Common myeloid progenitor, CD34-positive (primary cell): ENCODE measurements at regions of chr12 and their contacts with region 1.

Region 1: GRCh38 chr12:85920324-85920947 is 46.3 kb downstream of the NTS start:
- DNase-seq: peak; percentile 32 to 55 (median 43)
- H3K4me3 ChIP-seq: no peak overlapping the region
- H3K27ac ChIP-seq: no peak overlapping the region
- H3K4me1 ChIP-seq: no peaks in the 10 kb centered on the region
- H3K27me3 ChIP-seq: no peaks in the 10 kb centered on the region

Region 2: DNA sequence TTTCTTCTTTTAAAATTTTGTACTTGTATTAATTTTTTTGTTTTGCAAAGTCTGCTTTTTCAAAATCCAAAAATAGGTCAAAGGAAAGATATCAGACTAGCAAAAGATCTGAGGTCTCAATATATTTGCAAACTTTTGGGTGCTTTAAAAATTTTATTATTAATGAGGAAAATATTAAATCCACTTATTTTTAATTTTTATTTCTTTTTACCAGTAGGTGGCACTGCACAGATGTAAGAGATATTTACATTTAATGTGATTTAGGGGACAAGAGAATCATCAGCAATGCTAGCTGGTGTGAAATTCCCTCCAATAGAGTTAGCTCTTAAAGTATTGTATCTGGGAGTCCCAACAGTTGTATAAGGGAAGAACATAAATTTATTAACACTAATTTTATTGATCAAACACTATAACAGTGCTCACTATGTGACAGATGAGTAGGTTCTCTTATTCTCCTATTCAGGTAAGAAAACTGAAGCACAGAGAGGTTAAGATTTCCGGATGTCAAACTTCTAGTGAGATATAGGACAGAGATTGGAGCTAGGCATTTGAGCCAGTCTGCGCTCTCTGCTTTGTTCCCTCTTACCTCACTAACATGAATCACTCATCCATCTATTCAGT is 609.9 kb before region 1 on chr12:
- CTCF ChIA-PET with region 1: interaction called, 15 read pairs
- POLR2A ChIA-PET with region 1: no interaction called
- DNase-seq: peak; percentile 7 to 26 (median 22)
- H3K4me3 ChIP-seq: no peak overlapping the region
- H3K27ac ChIP-seq: no peak overlapping the region
- H3K4me1 ChIP-seq: no peaks in the 10 kb centered on the region
- H3K27me3 ChIP-seq: peaks cover 1 to 29% (median 7%) of the 10 kb centered on the region in 5 experiments

Region 3: DNA sequence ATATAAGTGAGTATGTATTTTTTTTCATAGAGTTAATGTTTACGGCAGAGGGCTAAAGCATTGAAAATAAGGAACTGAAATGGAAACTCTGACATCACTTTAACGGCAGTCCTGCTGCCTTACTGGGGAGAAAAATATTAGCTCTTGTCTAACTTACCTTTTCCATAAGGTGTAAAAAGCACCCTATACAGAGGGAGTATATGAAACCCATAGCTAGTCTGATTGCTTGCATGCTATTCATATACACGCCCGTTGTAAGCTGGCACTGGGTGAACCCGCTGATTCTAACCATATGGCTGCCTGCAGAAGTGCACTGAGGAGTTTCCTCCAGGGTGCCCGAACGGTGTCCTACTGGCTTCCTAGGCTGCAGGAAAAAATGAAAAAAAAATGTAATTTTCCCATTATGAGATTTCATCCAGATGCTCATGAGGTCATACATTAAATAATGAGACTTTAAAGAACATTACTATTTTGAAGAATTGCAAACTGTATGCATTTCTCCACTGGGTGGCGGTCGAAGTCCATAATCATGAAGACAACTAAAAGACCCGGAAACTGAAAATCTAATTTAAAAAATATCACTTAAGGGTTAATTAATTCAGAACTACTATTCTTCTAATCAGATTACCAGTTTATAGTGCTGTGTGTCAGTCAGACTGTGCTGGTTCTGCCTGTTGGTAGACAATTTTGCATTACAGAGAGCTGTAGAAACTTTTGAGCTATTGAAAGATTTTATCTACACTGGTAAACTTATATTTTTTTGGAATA is 495.7 kb before region 1 on chr12:
- CTCF ChIA-PET with region 1: interaction called, 13 read pairs
- POLR2A ChIA-PET with region 1: no interaction called
- DNase-seq: peak; percentile 38 to 71 (median 67)
- H3K4me3 ChIP-seq: peak overlapping the region in 6 of 7 experiments; percentile 30 to 83 (median 66)
- H3K27ac ChIP-seq: no peak overlapping the region
- H3K4me1 ChIP-seq: peaks cover 0 to 6% (median 4%) of the 10 kb centered on the region in 4 experiments
- H3K27me3 ChIP-seq: peaks cover 2 to 9% (median 5%) of the 10 kb centered on the region in 5 experiments

Region 4: GRCh38 chr12:85468356-85469157 is 451.9 kb before region 1 on chr12:
- CTCF ChIA-PET with region 1: interaction called, 19 read pairs
- POLR2A ChIA-PET with region 1: interaction called, 3 read pairs
- DNase-seq: peak; percentile 63 to 84 (median 80)
- H3K4me3 ChIP-seq: peak overlapping the region in 6 of 7 experiments; percentile 44 to 76 (median 54)
- H3K27ac ChIP-seq: peak overlapping the region in 1 of 2 experiments; percentile 22
- H3K4me1 ChIP-seq: peaks cover 8 to 40% (median 24%) of the 10 kb centered on the region in 4 experiments
- H3K27me3 ChIP-seq: no peaks in the 10 kb centered on the region